ENCODE measurements at regions of chr6 and their contacts with region 1.

Region 1: GRCh38 chr6:12233693-12234571 is 56.2 kb upstream of the EDN1 start:
- DNase-seq: peak; percentile 46
- H3K4me3 ChIP-seq: no peak overlapping the region
- CTCF ChIP-seq: peak; percentile 60

Region 2: GRCh38 chr6:11585426-11586016 is 648.4 kb before region 1 on chr6:
- CTCF ChIA-PET with region 1: interaction called, 30 read pairs
- POLR2A ChIA-PET with region 1: no interaction called
- DNase-seq: no peak
- H3K4me3 ChIP-seq: no peak overlapping the region
- CTCF ChIP-seq: peak; percentile 50

Region 3: DNA sequence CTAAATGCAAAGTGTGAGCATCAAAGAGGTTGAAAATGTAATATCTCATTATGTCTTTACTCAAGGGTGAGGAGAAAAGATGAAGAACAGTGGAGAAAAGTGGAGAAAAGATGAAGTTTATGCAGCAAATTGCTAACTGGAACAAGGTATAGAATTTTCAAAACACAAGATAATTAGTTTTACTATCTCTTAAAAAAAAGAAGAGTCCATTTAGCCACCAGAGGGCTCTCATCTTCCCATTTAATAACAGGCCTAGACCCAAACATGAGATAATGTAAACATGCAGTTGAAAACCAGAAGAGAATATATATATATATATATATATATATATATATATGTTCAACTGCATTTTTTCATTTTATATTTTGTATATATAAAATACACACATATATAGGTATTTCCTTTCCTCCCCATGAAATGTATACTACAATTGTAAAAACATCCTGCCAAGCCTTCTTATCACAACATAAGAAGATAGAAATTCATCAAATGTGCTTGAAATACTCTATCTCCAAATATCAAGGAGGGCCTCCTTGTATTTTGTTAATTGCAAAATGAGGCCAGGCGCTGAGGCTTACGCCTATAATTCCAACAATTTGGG is 533.7 kb before region 1 on chr6:
- CTCF ChIA-PET with region 1: interaction called, 12 read pairs
- POLR2A ChIA-PET with region 1: no interaction called
- DNase-seq: no peak
- H3K4me3 ChIP-seq: no peak overlapping the region
- CTCF ChIP-seq: peak; percentile 21

Region 4: DNA sequence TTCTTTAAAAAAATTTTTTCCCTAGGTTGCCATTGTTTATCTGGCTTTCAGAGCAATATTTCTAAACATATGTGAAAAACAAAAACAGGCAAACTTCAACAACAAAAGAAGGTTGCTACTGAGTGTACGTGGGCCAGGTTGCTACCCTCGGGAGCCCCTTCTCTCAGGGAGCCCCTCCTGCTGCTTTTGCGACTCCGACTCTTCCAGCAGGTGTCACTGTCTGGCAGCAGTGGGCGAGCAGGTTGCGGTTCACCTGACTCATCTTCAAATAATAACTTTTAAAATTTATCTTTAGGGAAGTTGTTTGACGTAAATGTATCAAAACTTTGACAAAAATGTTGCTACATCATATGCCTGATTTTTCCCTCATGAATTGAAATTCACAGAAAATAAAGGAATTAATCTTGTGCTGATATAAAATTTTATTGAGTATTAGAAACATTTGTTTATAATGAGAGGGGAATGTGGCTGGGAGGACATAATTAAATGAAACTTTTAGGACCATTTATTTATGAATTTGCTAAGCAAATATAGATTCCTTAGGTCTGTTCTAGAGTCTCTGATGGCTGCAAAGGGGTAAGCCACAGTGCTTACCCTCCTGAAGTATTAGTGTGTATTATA is 83.0 kb before region 1 on chr6:
- CTCF ChIA-PET with region 1: interaction called, 14 read pairs
- POLR2A ChIA-PET with region 1: no interaction called
- DNase-seq: no peak
- H3K4me3 ChIP-seq: no peak overlapping the region
- CTCF ChIP-seq: peak; percentile 30

Region 5: DNA sequence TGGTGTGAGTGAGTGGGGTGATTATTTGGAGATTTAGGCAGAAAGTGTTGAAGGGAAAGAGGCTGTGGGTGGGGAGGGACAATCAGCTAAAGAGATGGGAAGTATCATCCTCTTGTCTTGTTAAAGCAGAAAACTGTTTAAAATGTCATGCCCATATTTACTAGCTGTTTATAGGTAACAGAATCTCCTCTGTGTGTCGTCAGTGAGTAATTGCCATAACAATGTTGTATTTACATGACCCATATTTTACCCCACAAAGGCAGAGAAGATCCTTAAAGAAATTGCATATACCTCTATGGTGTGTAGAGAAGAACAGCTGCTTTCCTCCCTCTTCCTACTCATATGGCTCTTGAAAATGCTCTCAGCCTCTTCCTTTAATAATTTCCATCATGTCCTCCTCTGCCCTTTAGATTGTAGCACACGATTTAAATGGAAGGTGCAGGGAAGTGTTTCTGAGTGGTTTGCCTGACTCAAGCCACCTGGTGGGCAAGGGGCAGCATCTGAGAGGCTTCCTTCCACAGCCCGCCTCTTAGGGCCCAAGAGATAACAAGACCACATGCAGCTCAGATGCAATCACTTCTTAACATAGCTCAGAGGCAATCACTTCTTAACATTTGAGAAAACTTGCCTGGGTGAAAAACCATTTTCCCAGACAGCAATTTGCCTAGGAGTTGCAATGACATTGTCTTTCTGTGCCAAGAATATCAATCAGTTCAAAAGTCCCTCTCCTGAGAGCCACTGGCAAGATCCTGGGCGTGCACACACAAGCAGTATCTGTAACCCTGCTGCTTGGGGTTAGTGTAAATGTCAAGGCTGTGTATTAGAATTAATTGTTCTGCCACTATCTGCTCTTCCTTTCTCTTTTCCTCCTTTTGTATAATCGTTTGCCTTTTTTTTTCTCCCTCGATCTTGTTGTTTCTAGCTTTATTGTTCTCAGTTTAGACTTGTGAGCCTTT is 12.1 kb after region 1 on chr6:
- CTCF ChIA-PET with region 1: interaction called, 13 read pairs
- POLR2A ChIA-PET with region 1: no interaction called
- DNase-seq: no peak
- H3K4me3 ChIP-seq: no peak overlapping the region
- CTCF ChIP-seq: no peak

Region 6: GRCh38 chr6:12371641-12372146 is 137.8 kb after region 1 on chr6:
- CTCF ChIA-PET with region 1: no interaction called
- POLR2A ChIA-PET with region 1: no interaction called
- DNase-seq: no peak
- H3K4me3 ChIP-seq: no peak overlapping the region
- CTCF ChIP-seq: no peak